ENCODE measurements at regions of chr16 and their contacts with region 1.

Region 1: GRCh38 chr16:48365581-48366164 is 19.5 kb downstream of the SIAH1 start:
- DNase-seq: peak; percentile 89
- H3K4me3 Mint-ChIP-seq: peak overlapping the region; percentile 90
- H3K27ac Mint-ChIP-seq: peak overlapping the region; percentile 99
- H3K4me1 Mint-ChIP-seq: peaks cover 56% of the 10 kb centered on the region
- H3K27me3 Mint-ChIP-seq: no peaks in the 10 kb centered on the region

Region 2: GRCh38 chr16:48168075-48168474 is 197.6 kb before region 1 on chr16:
- CTCF ChIA-PET with region 1: no interaction called
- POLR2A ChIA-PET with region 1: no interaction called
- DNase-seq: no peak
- H3K4me3 Mint-ChIP-seq: no peak overlapping the region
- H3K27ac Mint-ChIP-seq: no peak overlapping the region
- H3K4me1 Mint-ChIP-seq: peaks cover 12% of the 10 kb centered on the region
- H3K27me3 Mint-ChIP-seq: peaks cover 3% of the 10 kb centered on the region

Region 3: GRCh38 chr16:48353565-48354163 is 12.0 kb before region 1 on chr16:
- CTCF ChIA-PET with region 1: interaction called, 28 read pairs
- POLR2A ChIA-PET with region 1: interaction called, 21 read pairs
- DNase-seq: peak; percentile 73
- H3K4me3 Mint-ChIP-seq: no peak overlapping the region
- H3K27ac Mint-ChIP-seq: peak overlapping the region; percentile 55
- H3K4me1 Mint-ChIP-seq: peaks cover 13% of the 10 kb centered on the region
- H3K27me3 Mint-ChIP-seq: no peaks in the 10 kb centered on the region

Region 4: GRCh38 chr16:48378836-48379235 is 13.2 kb after region 1 on chr16:
- CTCF ChIA-PET with region 1: interaction called, 8 read pairs
- POLR2A ChIA-PET with region 1: interaction called, 79 read pairs
- DNase-seq: no peak
- H3K4me3 Mint-ChIP-seq: no peak overlapping the region
- H3K27ac Mint-ChIP-seq: no peak overlapping the region
- H3K4me1 Mint-ChIP-seq: peaks cover 43% of the 10 kb centered on the region
- H3K27me3 Mint-ChIP-seq: no peaks in the 10 kb centered on the region

Region 5: GRCh38 chr16:48385272-48386150 is 19.8 kb after region 1 on chr16 and contains the start of gene SIAH1:
- CTCF ChIA-PET with region 1: interaction called, 8 read pairs
- POLR2A ChIA-PET with region 1: interaction called, 79 read pairs
- DNase-seq: peak; percentile 88
- H3K4me3 Mint-ChIP-seq: peak within 1 kb of the TSS; percentile 88
- H3K27ac Mint-ChIP-seq: peak within 1 kb of the TSS; percentile 85
- H3K4me1 Mint-ChIP-seq: peaks cover 22% of the 10 kb centered on the region
- H3K27me3 Mint-ChIP-seq: no peaks in the 10 kb centered on the region
- total RNA-seq, gene SIAH1: 16.1 to 16.5 TPM

Region 6: DNA sequence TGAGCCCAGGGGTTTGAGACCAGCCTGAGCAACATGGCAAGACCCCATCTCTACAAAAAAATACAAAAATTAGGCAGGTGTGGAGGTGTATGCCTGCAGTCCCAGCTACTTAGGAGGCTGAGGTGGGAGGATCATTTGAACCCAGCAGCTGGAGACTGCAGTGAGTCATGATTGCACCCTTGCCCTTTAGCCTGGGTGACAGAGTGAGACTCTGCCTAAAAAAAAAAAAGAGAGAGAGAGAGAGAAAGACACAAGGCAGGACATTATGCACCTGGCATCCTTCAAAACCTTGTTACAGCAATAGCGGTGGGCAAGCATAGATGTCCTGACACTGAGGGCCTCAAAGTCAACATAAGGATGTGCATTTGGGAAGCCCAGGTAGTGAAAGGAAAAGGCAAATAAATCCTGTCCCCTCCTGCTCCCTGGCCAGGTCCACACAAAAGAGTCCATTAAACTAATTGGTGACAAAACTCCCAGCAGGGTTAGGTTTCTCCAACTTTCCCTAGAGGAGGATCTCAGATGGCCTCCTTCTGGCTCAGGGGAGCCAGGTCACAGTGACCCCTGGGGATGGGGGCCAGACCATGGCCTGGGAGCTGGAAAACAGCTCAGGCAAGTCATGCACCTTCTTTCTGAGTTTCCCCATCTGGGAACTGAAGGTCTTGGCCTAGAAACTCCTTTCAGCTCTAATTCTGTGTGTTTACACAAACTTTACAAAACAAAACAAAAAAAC is 39.6 kb after region 1 on chr16:
- CTCF ChIA-PET with region 1: no interaction called
- POLR2A ChIA-PET with region 1: no interaction called
- DNase-seq: no peak
- H3K4me3 Mint-ChIP-seq: no peak overlapping the region
- H3K27ac Mint-ChIP-seq: no peak overlapping the region
- H3K4me1 Mint-ChIP-seq: peaks cover 6% of the 10 kb centered on the region
- H3K27me3 Mint-ChIP-seq: peaks cover 6% of the 10 kb centered on the region